WTC11 (cell line): ENCODE measurements at regions of chr1 and their contacts with region 1.

Region 1: GRCh38 chr1:204806943-204807687 is 63.5 kb upstream of the NFASC start:
- DNase-seq: peak; percentile 92
- ATAC-seq: peak; percentile 84
- H3K4me3 Mint-ChIP-seq: peak overlapping the region; percentile 77
- H3K27ac Mint-ChIP-seq: no peak overlapping the region
- H3K4me1 Mint-ChIP-seq: peaks cover 13% of the 10 kb centered on the region
- H3K27me3 Mint-ChIP-seq: peaks cover 15% of the 10 kb centered on the region
- CTCF ChIP-seq: peak; percentile 99

Region 2: DNA sequence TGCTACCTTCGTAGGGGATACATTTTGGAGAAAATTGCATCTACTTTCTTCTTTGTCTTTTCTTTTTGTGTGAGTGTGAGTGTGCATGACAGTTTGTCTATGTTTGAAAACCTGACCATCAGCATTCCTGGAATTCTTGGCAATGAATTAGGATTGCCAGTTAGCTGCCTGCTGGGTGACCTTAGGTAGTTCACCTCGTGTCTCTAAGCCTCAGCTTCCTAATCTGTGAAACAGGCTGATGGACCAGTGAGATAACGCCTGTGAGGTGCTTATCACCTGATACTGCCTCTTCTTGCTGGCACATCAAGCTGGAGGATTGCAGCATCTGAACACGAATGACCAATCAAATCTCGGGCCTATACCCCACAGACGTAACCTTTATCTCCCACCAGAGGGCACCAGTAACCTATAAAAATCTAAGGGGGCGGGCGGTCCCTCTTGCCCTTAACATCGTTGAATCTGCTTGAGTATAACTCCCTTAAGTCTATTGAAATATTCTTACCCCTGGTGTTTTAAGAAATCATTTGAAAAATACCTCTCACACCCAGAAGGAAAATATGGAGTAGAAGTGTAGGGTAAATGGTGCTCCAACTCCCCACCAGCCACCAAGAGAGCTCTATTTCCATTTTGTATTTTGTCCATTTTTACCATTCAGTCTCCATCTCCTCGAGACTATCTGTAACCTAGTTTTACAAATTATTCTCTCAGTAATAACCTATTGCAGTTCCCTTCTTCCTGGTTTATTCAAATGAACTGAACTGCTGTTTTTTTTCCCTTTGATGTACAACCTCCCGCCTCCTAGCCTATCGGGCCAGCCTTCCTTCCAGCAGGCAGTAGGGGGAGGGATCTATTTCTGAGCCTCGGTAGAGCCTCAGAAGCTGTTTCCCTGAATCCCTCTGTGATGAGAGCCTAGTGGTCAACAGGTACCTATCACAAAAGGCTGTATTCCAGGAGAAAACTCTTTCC is 241.2 kb before region 1 on chr1:
- CTCF ChIA-PET with region 1: interaction called, 216 read pairs
- POLR2A ChIA-PET with region 1: interaction called, 5 read pairs
- DNase-seq: peak; percentile 40
- ATAC-seq: peak; percentile 85
- H3K4me3 Mint-ChIP-seq: peak overlapping the region; percentile 53
- H3K27ac Mint-ChIP-seq: peak overlapping the region; percentile 71
- H3K4me1 Mint-ChIP-seq: peaks cover 54% of the 10 kb centered on the region
- H3K27me3 Mint-ChIP-seq: peaks cover 6% of the 10 kb centered on the region
- CTCF ChIP-seq: peak; percentile 68

Region 3: GRCh38 chr1:204607910-204608309 is 199.2 kb before region 1 on chr1:
- CTCF ChIA-PET with region 1: interaction called, 12 read pairs
- POLR2A ChIA-PET with region 1: no interaction called
- DNase-seq: no peak
- ATAC-seq: no peak
- H3K4me3 Mint-ChIP-seq: no peak overlapping the region
- H3K27ac Mint-ChIP-seq: no peak overlapping the region
- H3K4me1 Mint-ChIP-seq: peaks cover 6% of the 10 kb centered on the region; the same call in 1 of the 2 replicates
- H3K27me3 Mint-ChIP-seq: peaks cover 11% of the 10 kb centered on the region
- CTCF ChIP-seq: no peak

Region 4: DNA sequence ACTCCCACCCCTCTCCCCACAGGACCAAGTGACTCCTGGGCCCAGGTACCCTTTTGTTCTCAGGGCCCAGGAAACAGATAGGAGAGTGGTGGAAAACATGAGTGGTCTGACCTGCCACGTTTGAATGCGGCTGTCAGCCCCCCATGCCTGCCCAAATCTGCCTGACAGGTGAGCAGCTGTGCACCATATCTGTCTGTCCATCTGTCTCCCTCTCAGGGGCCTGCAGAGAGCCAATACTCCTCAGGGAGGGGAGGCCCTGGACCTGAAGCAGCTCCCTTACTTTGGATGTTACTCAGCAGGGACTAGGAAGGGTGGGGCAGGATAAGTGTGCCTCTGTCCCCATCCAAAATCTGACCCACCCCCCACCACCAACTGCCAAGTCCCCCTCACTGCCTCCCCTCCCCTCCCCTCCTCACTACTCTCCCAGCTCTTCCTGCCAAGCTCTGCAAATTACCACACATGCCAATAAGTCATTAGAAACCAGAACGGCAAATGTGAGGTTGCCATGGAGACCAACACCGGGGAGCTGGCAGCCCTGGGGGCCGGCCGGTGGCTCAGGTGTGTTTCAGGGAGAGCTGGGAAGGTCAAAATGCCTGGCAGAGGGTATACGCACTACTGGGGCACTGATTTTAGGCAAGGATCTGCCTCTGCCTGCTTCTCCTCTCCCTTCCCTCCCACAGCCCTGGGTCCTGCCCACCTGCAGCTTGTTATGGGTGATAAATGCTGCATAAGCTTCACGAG is 133.0 kb before region 1 on chr1:
- CTCF ChIA-PET with region 1: interaction called, 15 read pairs
- POLR2A ChIA-PET with region 1: no interaction called
- DNase-seq: peak; percentile 37
- ATAC-seq: peak; percentile 50
- H3K4me3 Mint-ChIP-seq: no peak overlapping the region
- H3K27ac Mint-ChIP-seq: no peak overlapping the region
- H3K4me1 Mint-ChIP-seq: peaks cover 8% of the 10 kb centered on the region
- H3K27me3 Mint-ChIP-seq: no peaks in the 10 kb centered on the region
- CTCF ChIP-seq: no peak

Region 5: GRCh38 chr1:204746838-204747442 is 60.2 kb before region 1 on chr1:
- CTCF ChIA-PET with region 1: interaction called, 34 read pairs
- POLR2A ChIA-PET with region 1: no interaction called
- DNase-seq: peak; percentile 68
- ATAC-seq: peak; percentile 87
- H3K4me3 Mint-ChIP-seq: no peak overlapping the region
- H3K27ac Mint-ChIP-seq: no peak overlapping the region
- H3K4me1 Mint-ChIP-seq: peaks cover 29% of the 10 kb centered on the region
- H3K27me3 Mint-ChIP-seq: peaks cover 12% of the 10 kb centered on the region; the same call in 1 of the 2 replicates
- CTCF ChIP-seq: peak; percentile 99

Region 6: GRCh38 chr1:204828338-204828850 is 21.3 kb after region 1 on chr1:
- CTCF ChIA-PET with region 1: interaction called, 26 read pairs
- POLR2A ChIA-PET with region 1: no interaction called
- DNase-seq: peak; percentile 88
- ATAC-seq: peak; percentile 82
- H3K4me3 Mint-ChIP-seq: peak overlapping the region; percentile 73
- H3K27ac Mint-ChIP-seq: no peak overlapping the region
- H3K4me1 Mint-ChIP-seq: peaks cover 34% of the 10 kb centered on the region
- H3K27me3 Mint-ChIP-seq: peaks cover 22% of the 10 kb centered on the region
- CTCF ChIP-seq: no peak

Region 7: DNA sequence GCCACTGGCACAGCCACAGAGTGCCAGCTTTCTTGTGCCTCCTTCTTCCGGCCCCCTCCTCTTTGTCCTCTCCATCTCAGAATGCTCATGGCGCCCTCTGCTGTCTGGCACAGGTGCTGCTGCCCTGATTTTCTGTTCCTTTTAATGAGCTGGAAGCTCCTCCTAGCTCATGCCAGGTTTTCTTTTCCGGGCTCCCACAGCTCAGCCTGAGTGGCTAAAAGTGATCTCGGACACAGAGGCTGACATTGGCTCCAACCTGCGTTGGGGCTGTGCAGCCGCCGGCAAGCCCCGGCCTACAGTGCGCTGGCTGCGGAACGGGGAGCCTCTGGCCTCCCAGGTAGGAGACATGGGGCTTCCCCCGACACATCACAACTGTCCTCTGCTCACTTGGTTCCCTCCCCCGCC is 254.6 kb after region 1 on chr1:
- CTCF ChIA-PET with region 1: interaction called, 41 read pairs
- POLR2A ChIA-PET with region 1: no interaction called
- DNase-seq: peak; percentile 96
- ATAC-seq: peak; percentile 85
- H3K4me3 Mint-ChIP-seq: no peak overlapping the region
- H3K27ac Mint-ChIP-seq: no peak overlapping the region
- H3K4me1 Mint-ChIP-seq: peaks cover 9% of the 10 kb centered on the region; the same call in 1 of the 2 replicates
- H3K27me3 Mint-ChIP-seq: no peaks in the 10 kb centered on the region
- CTCF ChIP-seq: peak; percentile 84